ENCODE measurements at regions of chr17 and their contacts with region 1.

Region 1: DNA sequence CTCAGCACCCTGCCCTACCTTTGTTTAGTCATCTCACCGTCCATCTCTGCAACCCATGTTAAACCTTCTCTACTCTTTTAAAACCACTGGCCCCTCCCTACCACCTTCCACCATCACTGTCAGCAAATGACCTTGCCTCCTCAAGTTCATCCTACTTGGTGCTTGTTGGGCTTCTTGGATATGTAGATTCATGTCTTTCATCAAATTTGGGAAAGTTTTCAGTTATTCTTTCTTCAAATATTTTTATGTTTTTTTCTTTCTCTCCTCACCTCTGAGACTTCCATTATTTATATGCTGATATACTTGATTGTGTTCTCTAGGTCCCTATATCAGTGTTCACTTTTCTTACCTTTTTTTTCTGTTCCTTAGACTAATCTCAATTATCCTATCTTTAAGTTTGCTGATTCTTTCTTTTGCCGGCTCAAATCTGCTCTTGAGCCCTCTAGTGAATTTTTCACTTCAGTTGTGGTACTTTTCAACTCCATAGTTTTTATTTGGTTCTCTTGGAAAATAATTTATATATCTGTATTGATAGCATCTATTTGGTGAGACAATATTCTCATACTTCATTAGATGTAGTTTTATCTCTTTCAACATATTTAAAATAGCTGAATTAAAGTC is 28.7 kb upstream of the ALDH3A2 start:
- DNase-seq: no peak
- ATAC-seq: no peak
- H3K4me3 ChIP-seq: no peak overlapping the region
- H3K4me3 Mint-ChIP-seq: no peak overlapping the region
- H3K27ac ChIP-seq: no peak overlapping the region
- H3K27ac Mint-ChIP-seq: no peak overlapping the region
- H3K4me1 ChIP-seq: no peaks in the 10 kb centered on the region
- H3K4me1 Mint-ChIP-seq: no peaks in the 10 kb centered on the region
- H3K27me3 ChIP-seq: no peaks in the 10 kb centered on the region
- H3K27me3 Mint-ChIP-seq: no peaks in the 10 kb centered on the region
- CTCF ChIP-seq: no peak

Region 2: DNA sequence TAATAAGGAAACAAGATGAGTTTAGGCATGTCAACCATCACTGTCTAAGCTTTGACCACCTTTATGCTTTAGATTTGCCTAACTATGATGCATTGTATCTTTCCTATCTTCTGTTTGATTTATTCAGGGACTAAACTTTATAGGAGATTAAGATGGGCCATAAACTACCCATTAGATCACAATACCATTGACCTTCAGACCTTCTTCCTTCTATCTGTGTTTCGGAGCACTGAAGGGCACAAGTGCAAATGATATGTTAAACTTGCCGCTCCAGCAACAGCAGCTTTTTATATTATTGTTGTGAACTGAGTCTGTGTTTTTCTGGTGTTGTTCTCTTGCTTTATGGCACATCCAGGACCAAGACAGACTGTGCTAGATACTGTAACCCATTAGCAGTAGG is 12.1 kb after region 1 on chr17:
- CTCF ChIA-PET with region 1: no interaction called
- POLR2A ChIA-PET with region 1: no interaction called
- intact Hi-C with region 1: no loop called
- DNase-seq: no peak
- ATAC-seq: no peak
- H3K4me3 ChIP-seq: no peak overlapping the region
- H3K4me3 Mint-ChIP-seq: no peak overlapping the region
- H3K27ac ChIP-seq: no peak overlapping the region
- H3K27ac Mint-ChIP-seq: no peak overlapping the region
- H3K4me1 ChIP-seq: no peaks in the 10 kb centered on the region
- H3K4me1 Mint-ChIP-seq: no peaks in the 10 kb centered on the region
- H3K27me3 ChIP-seq: no peaks in the 10 kb centered on the region
- H3K27me3 Mint-ChIP-seq: peaks cover 32% of the 10 kb centered on the region
- CTCF ChIP-seq: no peak

Region 3: DNA sequence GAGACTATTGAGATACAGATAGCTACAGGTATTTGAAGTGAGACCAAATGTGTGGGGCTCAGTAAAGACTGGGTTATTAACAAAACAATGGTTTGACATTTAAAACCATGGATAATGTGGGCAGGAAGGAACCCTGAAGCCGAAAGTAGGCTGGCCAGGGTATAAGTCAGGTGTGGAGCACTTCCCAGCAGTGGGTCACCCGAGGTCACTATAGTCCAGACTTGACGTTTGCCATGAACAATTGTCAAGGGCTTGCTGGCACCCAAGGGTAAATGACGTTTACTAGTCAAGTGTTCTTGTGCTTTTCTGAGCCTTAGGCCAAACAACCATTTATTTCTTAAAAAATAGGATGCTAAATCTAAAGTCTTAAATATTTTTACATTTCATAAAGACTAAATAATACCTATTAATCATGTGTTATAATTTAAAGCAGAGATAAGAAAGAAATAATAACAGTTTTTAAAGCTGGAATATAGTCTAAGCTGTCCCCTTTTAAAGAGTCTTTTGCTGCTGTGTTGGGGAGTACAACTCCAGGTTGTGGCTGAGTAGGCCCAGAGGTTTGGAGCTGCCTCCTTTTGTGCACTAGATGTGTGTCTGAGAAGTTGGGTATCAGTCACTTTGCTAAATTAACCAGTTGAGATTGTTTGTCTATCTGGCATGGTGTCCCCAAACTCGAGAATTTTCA is 44.5 kb after region 1 on chr17:
- CTCF ChIA-PET with region 1: no interaction called
- POLR2A ChIA-PET with region 1: no interaction called
- intact Hi-C with region 1: loop called in 1 of 2 experiments (anchors 5 kb)
- DNase-seq: no peak
- ATAC-seq: no peak
- H3K4me3 ChIP-seq: no peak overlapping the region
- H3K4me3 Mint-ChIP-seq: no peak overlapping the region
- H3K27ac ChIP-seq: no peak overlapping the region
- H3K27ac Mint-ChIP-seq: no peak overlapping the region
- H3K4me1 ChIP-seq: no peaks in the 10 kb centered on the region
- H3K4me1 Mint-ChIP-seq: no peaks in the 10 kb centered on the region
- H3K27me3 ChIP-seq: no peaks in the 10 kb centered on the region
- H3K27me3 Mint-ChIP-seq: no peaks in the 10 kb centered on the region
- CTCF ChIP-seq: no peak

Measured in CD4-positive, alpha-beta T cell (primary cell).